IMR-90 (cell line): ENCODE measurements at regions of chr14 and their contacts with region 1.

Region 1: DNA sequence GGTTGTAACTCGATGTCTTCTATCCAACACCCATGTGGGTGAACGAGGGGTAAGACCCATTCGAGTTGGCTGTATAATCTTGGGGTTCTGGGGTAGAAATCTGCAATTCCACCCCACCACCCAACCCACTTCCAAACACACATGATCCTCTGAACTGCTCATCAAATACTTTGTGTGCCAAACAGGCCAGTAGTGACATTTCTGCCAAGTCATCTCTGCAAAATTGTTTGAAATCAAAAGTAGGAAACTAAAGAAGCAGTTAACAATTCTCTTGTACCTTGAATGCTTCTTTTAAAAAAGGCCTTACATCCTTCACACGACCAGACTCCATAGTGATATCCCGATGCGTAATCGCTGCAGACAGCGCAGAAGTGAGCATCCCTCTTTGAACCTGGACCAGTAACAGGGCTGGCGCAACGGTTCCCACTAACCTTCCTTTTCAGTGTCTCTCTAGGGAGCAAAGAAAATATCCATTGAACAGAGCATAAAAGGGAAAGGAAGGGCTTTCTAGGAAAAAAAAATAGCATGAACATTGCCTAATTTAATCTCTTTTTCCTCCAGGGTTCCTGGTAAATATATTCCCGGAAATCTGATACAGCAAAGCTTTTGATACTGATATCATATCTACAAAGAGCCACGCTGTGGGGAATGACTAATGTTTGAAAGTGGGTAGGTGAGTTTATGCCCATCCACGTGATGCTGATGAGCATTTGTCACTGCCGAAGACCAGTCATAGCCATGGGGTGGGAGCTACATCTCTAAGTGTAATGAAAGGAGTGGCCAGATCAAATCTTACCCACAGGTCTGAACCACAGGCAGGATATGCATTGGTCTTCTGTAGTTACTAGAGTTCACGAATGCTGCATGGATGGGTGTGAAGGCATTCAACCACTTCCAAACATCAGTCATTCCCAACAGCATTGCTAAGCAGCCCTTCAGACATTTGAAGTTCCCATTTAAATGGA is 14.2 kb downstream of the ESR2 start:
- DNase-seq: peak; percentile 24
- ATAC-seq: no peak
- H3K4me3 ChIP-seq: no peak overlapping the region
- H3K27ac ChIP-seq: no peak overlapping the region
- H3K4me1 ChIP-seq: peaks cover 3% of the 10 kb centered on the region; the same call in 1 of the 2 replicates
- H3K27me3 ChIP-seq: no peaks in the 10 kb centered on the region; the same call in 1 of the 2 replicates
- CTCF ChIP-seq: no peak
- POLR2A ChIP-seq: no peak
- RAD21 ChIP-seq: no peak

Region 2: GRCh38 chr14:62736426-62737043 is 1543.5 kb before region 1 on chr14:
- CTCF ChIA-PET with region 1: no interaction called
- POLR2A ChIA-PET with region 1: no interaction called
- dilution Hi-C with region 1: no loop called
- in situ Hi-C with region 1: no loop called
- intact Hi-C with region 1: loop called (anchors 10 kb)
- DNase-seq: peak; percentile 10
- ATAC-seq: no peak
- H3K4me3 ChIP-seq: no peak overlapping the region
- H3K27ac ChIP-seq: no peak overlapping the region
- H3K4me1 ChIP-seq: no peaks in the 10 kb centered on the region
- H3K27me3 ChIP-seq: no peaks in the 10 kb centered on the region
- CTCF ChIP-seq: no peak
- POLR2A ChIP-seq: no peak
- RAD21 ChIP-seq: no peak

Region 3: GRCh38 chr14:62896932-62897456 is 1383.0 kb before region 1 on chr14:
- CTCF ChIA-PET with region 1: no interaction called
- POLR2A ChIA-PET with region 1: no interaction called
- dilution Hi-C with region 1: no loop called
- in situ Hi-C with region 1: no loop called
- intact Hi-C with region 1: no loop called
- DNase-seq: no peak
- ATAC-seq: no peak
- H3K4me3 ChIP-seq: no peak overlapping the region
- H3K27ac ChIP-seq: no peak overlapping the region
- H3K4me1 ChIP-seq: no peaks in the 10 kb centered on the region
- H3K27me3 ChIP-seq: no peaks in the 10 kb centered on the region
- CTCF ChIP-seq: no peak
- POLR2A ChIP-seq: no peak
- RAD21 ChIP-seq: no peak

Region 4: GRCh38 chr14:64178814-64179213 is 101.2 kb before region 1 on chr14:
- CTCF ChIA-PET with region 1: no interaction called
- POLR2A ChIA-PET with region 1: no interaction called
- dilution Hi-C with region 1: no loop called
- in situ Hi-C with region 1: no loop called
- intact Hi-C with region 1: no loop called
- DNase-seq: no peak
- ATAC-seq: no peak
- H3K4me3 ChIP-seq: no peak overlapping the region
- H3K27ac ChIP-seq: no peak overlapping the region
- H3K4me1 ChIP-seq: 0 out of 2 replicates have a peak, but pooled peaks cover 2% of the 10 kb centered on the region
- H3K27me3 ChIP-seq: no peaks in the 10 kb centered on the region
- CTCF ChIP-seq: no peak
- POLR2A ChIP-seq: no peak
- RAD21 ChIP-seq: no peak

Region 5: GRCh38 chr14:64438181-64438841 is 158.3 kb after region 1 on chr14:
- CTCF ChIA-PET with region 1: no interaction called
- POLR2A ChIA-PET with region 1: no interaction called
- dilution Hi-C with region 1: no loop called
- in situ Hi-C with region 1: no loop called
- intact Hi-C with region 1: no loop called
- DNase-seq: peak; percentile 87
- ATAC-seq: peak; percentile 93
- H3K4me3 ChIP-seq: no peak overlapping the region
- H3K27ac ChIP-seq: peak overlapping the region; percentile 23; the same call in 1 of the 2 replicates
- H3K4me1 ChIP-seq: peaks cover 10% of the 10 kb centered on the region
- H3K27me3 ChIP-seq: no peaks in the 10 kb centered on the region
- CTCF ChIP-seq: no peak
- POLR2A ChIP-seq: no peak
- RAD21 ChIP-seq: no peak